Colonic mucosa (tissue), 4 donors: ENCODE measurements at regions of chr7 and their contacts with region 1.

Region 1: DNA sequence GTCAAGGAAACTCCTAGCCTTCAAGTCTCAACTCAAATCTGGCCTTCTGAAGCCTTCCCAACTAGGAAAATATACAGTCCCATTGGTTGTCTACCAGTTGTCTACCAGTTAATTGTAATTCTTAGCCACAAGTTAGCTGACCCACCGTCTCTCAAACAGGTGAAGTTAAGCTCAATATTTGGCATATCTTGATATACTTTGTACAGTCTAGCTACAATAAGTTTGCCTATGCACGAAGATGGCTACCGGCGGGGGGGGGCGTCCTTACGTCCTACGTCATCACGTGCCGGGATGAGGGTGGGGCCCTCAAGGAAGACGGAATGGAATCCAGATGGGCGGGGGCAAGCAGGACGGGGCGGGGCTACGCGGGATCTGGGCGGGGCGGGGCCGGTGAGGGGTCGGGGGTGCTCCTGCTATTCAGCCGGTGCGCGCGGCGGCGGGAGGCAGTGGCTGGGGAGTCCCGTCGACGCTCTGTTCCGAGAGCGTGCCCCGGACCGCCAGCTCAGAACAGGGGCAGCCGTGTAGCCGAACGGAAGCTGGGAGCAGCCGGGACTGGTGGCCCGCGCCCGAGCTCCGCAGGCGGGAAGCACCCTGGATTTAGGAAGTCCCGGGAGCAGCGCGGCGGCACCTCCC is at the start of gene AHR:
- DNase-seq: peak; percentile 95
- H3K4me3 ChIP-seq: peak within 1 kb of the TSS; percentile 95
- H3K27ac ChIP-seq: peak within 1 kb of the TSS; percentile 99
- H3K4me1 ChIP-seq: no peaks in the 10 kb centered on the region
- H3K27me3 ChIP-seq: no peaks in the 10 kb centered on the region
- CTCF ChIP-seq: no peak
- total RNA-seq, gene AHR: 30.3 to 48.9 TPM

Region 2: GRCh38 chr7:16678045-16678444 is 620.3 kb before region 1 on chr7:
- intact Hi-C with region 1: no loop called
- DNase-seq: no peak
- H3K4me3 ChIP-seq: no peak overlapping the region
- H3K27ac ChIP-seq: no peak overlapping the region
- H3K4me1 ChIP-seq: no peaks in the 10 kb centered on the region
- H3K27me3 ChIP-seq: no peaks in the 10 kb centered on the region
- CTCF ChIP-seq: no peak

Region 3: DNA sequence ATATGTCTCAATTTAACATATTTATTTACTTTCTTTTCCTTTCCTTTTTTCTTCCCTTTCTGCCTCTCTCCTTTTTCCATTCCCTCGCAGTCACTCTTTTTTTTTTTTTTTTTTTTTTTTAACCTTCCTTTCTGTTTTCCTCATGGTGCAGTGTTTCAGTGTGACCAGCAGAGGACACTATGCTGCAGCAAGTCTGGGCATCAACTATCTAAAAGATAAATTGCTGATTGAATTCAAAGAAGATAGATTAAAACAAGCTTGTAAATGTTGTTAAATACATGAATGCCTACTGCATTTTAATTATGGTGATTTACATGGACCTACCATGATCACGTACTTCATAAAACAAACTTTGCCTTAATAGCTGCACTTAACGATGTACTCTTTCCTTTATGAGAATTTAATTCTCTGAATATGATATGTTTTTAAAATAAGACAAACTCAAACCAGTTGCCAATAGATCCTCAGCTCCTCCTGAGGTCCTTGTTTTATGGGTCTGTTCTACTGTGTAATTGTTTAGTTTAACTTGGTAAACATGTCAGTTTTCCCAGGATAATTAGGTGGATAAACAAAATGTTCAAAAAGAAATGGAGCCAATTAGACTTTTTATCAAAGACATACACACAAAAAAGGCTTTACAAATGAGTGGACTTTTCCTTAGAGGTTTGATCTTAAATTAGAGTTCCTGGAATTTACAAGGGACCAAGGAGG is 315.5 kb before region 1 on chr7:
- intact Hi-C with region 1: loop called (anchors 5 kb)
- DNase-seq: no peak
- H3K4me3 ChIP-seq: no peak overlapping the region
- H3K27ac ChIP-seq: no peak overlapping the region
- H3K4me1 ChIP-seq: peaks cover 5% of the 10 kb centered on the region
- H3K27me3 ChIP-seq: no peaks in the 10 kb centered on the region
- CTCF ChIP-seq: peak; percentile 86

Region 4: GRCh38 chr7:17044858-17045257 is 253.5 kb before region 1 on chr7:
- intact Hi-C with region 1: no loop called
- DNase-seq: no peak
- H3K4me3 ChIP-seq: no peak overlapping the region
- H3K27ac ChIP-seq: no peak overlapping the region
- H3K4me1 ChIP-seq: no peaks in the 10 kb centered on the region
- H3K27me3 ChIP-seq: no peaks in the 10 kb centered on the region
- CTCF ChIP-seq: no peak

Region 5: GRCh38 chr7:17109017-17109416 is 189.3 kb before region 1 on chr7:
- intact Hi-C with region 1: no loop called
- DNase-seq: no peak
- H3K4me3 ChIP-seq: no peak overlapping the region
- H3K27ac ChIP-seq: no peak overlapping the region
- H3K4me1 ChIP-seq: no peaks in the 10 kb centered on the region
- H3K27me3 ChIP-seq: no peaks in the 10 kb centered on the region
- CTCF ChIP-seq: no peak

Region 6: DNA sequence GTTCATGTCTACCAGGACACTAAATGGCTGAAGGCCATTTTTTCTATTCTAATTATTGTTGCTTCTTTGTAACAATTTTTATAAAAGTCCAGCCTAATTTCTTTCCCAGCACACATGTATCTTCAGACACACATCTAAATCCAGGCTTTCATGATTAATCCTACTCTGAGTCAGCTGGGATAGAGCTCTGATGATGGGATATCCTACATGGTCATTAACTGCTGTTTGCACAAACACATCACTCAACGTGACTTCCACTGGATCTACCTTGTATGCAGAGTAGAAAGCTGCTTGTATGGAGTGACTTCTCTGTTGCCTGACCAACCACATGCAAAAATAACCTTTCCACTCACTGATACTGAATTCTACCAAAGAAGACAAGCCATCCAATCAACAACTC is 261.1 kb after region 1 on chr7:
- intact Hi-C with region 1: loop called (anchors 10 kb)
- DNase-seq: no peak
- H3K4me3 ChIP-seq: no peak overlapping the region
- H3K27ac ChIP-seq: peak overlapping the region; percentile 58
- H3K4me1 ChIP-seq: no peaks in the 10 kb centered on the region
- H3K27me3 ChIP-seq: no peaks in the 10 kb centered on the region
- CTCF ChIP-seq: no peak

Region 7: DNA sequence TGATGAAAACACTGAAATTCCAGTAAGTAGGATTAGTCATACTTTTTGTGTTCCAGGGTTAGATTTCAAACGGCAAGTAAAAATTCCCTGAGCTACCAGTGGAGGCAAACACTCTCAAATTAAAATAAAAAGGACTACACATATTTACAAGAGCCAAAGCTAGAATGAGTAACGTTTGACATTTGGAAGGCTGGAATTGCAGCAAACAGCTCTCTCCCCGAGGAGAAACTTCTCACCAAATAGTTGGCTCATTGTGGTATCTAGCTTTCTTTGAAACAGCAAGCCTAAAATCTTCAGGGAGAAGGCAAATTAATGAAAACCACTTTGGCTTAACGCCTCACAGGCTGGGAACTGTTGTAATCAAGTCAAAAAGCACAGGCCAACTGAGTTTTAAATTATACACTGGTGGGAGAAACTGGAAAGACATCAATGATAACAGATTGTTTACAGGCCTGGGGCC is 353.6 kb after region 1 on chr7:
- intact Hi-C with region 1: loop called (anchors 5 kb)
- DNase-seq: no peak
- H3K4me3 ChIP-seq: no peak overlapping the region
- H3K27ac ChIP-seq: no peak overlapping the region
- H3K4me1 ChIP-seq: no peaks in the 10 kb centered on the region
- H3K27me3 ChIP-seq: no peaks in the 10 kb centered on the region
- CTCF ChIP-seq: no peak